ENCODE measurements at regions of chr5 and their contacts with region 1.

Region 1: GRCh38 chr5:8068078-8068477 is 199.1 kb downstream of the MTRR start:
- DNase-seq: no peak
- ATAC-seq: no peak
- H3K4me3 ChIP-seq: no peak overlapping the region
- H3K27ac ChIP-seq: no peak overlapping the region
- H3K4me1 ChIP-seq: no peaks in the 10 kb centered on the region
- H3K27me3 ChIP-seq: no peaks in the 10 kb centered on the region
- CTCF ChIP-seq: no peak
- EP300 ChIP-seq: no peak
- POLR2A ChIP-seq: no peak
- RAD21 ChIP-seq: no peak

Region 2: DNA sequence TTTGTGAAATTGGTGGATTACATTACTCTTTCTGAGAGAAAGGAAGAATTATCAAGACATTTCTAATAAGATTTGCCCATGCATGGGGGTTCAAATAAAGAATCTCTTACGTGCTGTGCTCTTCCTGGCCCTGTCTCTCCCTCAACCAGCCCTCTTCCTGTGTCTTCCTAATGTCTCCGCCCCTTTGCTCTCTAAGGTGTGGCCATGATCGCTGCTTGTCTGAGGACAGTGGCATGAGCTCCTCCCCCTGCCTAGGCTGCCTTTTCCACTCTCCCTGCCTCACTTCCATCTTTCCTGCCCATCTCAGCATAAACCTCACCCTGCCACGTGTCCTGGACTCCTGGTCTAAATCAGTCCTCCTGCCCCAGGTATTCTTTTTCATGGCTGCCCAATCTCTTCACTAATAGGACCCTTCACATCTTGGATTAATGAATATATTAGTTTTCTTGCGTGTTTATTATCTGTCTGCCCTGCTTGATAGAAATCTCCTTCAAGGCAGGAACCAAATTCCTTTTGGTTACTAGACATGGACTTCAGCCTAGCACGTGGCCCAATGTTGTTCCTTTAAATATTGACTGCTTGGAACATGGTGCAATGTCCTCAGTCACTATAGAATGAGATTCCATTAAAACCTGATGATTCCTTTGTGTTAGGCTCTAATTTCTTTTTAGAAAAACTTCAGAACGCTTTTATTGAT is 76.8 kb before region 1 on chr5:
- CTCF ChIA-PET with region 1: no interaction called
- POLR2A ChIA-PET with region 1: no interaction called
- in situ Hi-C with region 1: no loop called
- intact Hi-C with region 1: loop called (anchors 5 kb)
- DNase-seq: peak; percentile 35 to 75 (median 52)
- ATAC-seq: peak; percentile 98
- H3K4me3 ChIP-seq: no peak overlapping the region
- H3K27ac ChIP-seq: no peak overlapping the region
- H3K4me1 ChIP-seq: peaks cover 3 to 4% of the 10 kb centered on the region in 2 experiments; a peak in 2 of 5 replicates
- H3K27me3 ChIP-seq: no peaks in the 10 kb centered on the region
- CTCF ChIP-seq: no peak
- EP300 ChIP-seq: no peak
- POLR2A ChIP-seq: no peak
- RAD21 ChIP-seq: no peak

Measured in K562 (cell line).